Activated T-helper 2 cell treated with anti-CD3 and anti-CD28 coated beads, Interferon-gamma antibody, Interleukin-2, Interleukin-4, amounts not matched to agents 10 μg/mL and 5 μg/mL and 100 μg/mL, durations not matched to agents 14 hours and 24 hours and 36 hours (primary cell): ENCODE measurements at regions of chr10 and their contacts with region 1.

Region 1: DNA sequence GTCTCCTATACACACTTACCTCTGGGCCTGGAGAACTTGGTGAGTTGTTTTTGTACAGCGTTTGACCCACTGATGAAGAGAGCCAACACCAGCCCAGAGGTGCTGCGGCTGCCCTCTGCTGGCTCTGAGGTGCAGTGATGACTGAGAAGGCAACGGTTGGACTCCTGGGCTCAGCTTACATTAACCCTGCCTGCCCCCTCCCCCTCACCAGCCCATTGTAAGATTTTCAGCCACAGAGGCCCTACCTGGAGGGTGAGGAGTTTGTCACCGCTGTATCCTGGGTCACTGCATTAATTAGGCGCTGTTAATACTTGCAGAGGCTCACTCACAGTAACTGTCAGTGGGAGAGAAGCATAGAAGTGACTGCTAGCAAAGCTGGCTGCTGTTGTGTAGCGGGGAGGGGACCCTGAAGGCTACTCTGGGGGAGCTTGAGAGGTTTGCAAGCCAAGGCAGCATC is 19.0 kb upstream of the ANKRD2 start:
- DNase-seq: peak; percentile 45
- H3K4me3 Mint-ChIP-seq: no peak overlapping the region
- H3K27ac Mint-ChIP-seq: no peak overlapping the region
- H3K4me1 Mint-ChIP-seq: peaks cover 2% of the 10 kb centered on the region
- H3K27me3 Mint-ChIP-seq: no peaks in the 10 kb centered on the region

Region 2: GRCh38 chr10:96470116-96470743 is 1083.4 kb before region 1 on chr10:
- intact Hi-C with region 1: no loop called
- DNase-seq: peak; percentile 18
- H3K4me3 Mint-ChIP-seq: no peak overlapping the region
- H3K27ac Mint-ChIP-seq: no peak overlapping the region
- H3K4me1 Mint-ChIP-seq: no peaks in the 10 kb centered on the region
- H3K27me3 Mint-ChIP-seq: peaks cover 9% of the 10 kb centered on the region

Region 3: DNA sequence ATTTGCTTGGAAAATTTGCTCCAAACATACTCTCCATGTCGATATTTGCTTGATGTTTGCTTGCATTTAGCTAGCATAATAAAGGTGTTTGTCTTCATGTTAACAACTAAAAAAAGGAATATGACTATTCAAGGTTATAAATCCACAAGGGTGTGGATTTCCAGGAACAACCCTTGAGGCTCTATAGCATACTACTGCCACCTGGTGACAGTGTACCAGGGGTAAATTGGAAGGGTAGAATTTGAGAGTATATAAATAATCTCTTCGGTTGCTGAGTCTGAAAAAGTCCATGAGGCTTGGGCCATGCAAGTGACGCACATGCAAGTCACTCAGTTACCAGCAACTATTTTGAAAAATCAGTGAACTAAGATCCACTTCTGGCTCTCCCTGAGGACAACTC is 436.2 kb before region 1 on chr10:
- intact Hi-C with region 1: no loop called
- DNase-seq: no peak
- H3K4me3 Mint-ChIP-seq: no peak overlapping the region
- H3K27ac Mint-ChIP-seq: no peak overlapping the region
- H3K4me1 Mint-ChIP-seq: no peaks in the 10 kb centered on the region
- H3K27me3 Mint-ChIP-seq: peaks cover 4% of the 10 kb centered on the region

Region 4: GRCh38 chr10:97407211-97407951 is 146.2 kb before region 1 on chr10:
- intact Hi-C with region 1: loop called (anchors 1 kb)
- DNase-seq: peak; percentile 57
- H3K4me3 Mint-ChIP-seq: peak overlapping the region; percentile 13
- H3K27ac Mint-ChIP-seq: peak overlapping the region; percentile 61
- H3K4me1 Mint-ChIP-seq: peaks cover 16% of the 10 kb centered on the region
- H3K27me3 Mint-ChIP-seq: no peaks in the 10 kb centered on the region

Region 5: GRCh38 chr10:97463363-97464132 is 90.1 kb before region 1 on chr10:
- intact Hi-C with region 1: loop called (anchors 1 kb)
- DNase-seq: no peak
- H3K4me3 Mint-ChIP-seq: no peak overlapping the region
- H3K27ac Mint-ChIP-seq: no peak overlapping the region
- H3K4me1 Mint-ChIP-seq: no peaks in the 10 kb centered on the region
- H3K27me3 Mint-ChIP-seq: no peaks in the 10 kb centered on the region

Region 6: DNA sequence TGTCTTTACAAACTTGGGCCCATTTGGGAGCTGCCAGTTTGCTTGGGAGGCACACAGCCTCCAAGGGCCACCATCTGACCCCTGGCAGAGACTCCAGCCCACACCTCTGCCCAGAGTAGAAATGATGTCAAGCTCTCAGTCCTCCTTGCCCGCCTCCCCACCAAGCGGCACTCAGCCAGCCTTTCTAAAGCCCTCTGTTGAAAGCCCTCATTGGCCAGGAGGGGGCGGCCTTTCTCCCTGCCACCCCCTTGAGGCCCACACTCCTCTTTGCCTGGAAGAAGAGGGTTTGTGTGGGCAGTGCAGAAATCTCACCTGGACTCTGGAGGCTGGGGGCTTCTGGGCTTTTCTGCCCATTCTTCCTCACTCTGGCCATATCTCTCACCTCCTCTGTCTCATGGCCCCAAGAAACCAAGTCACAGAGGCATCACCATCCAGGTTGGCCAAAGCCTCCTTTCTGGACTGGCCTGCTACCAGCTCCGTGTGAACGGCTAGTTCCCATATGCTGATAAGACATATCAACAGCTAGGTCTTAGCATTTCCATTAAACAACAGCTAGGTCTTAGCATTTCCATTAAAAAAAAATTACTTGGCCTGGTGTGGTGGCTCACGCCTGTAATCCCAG is 18.7 kb before region 1 on chr10:
- intact Hi-C with region 1: loop called (anchors 1 kb)
- DNase-seq: no peak
- H3K4me3 Mint-ChIP-seq: no peak overlapping the region
- H3K27ac Mint-ChIP-seq: no peak overlapping the region
- H3K4me1 Mint-ChIP-seq: peaks cover 2% of the 10 kb centered on the region
- H3K27me3 Mint-ChIP-seq: no peaks in the 10 kb centered on the region

Region 7: DNA sequence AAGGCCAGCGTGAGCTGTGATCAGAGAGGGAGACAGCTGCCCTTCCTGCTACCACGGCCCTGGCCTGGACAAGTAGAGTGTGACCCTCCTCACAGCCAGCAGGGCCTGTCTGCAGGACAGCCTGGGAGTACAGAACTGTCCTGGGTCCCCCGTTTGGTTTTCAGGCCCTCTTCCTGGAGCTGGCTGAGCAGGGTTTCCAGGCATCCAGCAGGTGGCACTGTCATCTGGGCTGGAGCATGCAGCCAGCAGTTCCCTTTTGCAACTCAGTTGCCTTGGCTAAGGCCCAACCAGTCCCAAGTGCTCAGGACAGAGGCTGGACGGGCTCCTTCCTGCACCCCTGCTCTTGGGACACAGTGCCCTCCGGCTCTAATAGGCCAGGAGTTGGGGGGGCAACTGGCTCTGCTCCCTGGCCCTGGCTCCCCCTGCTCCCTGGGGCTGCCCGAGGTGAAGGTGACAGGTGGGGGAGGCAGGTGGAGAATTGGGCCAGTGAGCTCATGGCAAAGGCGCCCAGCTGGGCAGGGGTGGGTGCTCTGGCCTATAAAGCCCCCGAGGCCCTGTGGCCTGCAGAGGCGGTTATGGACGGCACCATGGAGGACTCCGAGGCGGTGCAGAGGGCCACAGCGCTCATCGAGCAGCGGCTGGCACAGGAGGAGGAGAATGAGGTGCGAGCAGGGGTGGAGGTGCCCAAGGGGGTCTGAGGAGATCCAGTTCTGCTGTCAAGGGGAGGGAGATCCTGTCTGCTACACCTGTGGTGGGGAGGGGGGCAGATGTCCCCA is 18.8 kb after region 1 on chr10 and contains the start of gene ANKRD2:
- intact Hi-C with region 1: no loop called
- DNase-seq: peak; percentile 41
- H3K4me3 Mint-ChIP-seq: no peak within 1 kb of the TSS
- H3K27ac Mint-ChIP-seq: no peak within 1 kb of the TSS
- H3K4me1 Mint-ChIP-seq: no peaks in the 10 kb centered on the region
- H3K27me3 Mint-ChIP-seq: no peaks in the 10 kb centered on the region
- total RNA-seq, gene ANKRD2: 0.18 and 0.57 TPM in 2 replicates

Region 8: GRCh38 chr10:97676770-97677581 is 123.4 kb after region 1 on chr10:
- intact Hi-C with region 1: no loop called
- DNase-seq: no peak
- H3K4me3 Mint-ChIP-seq: no peak overlapping the region
- H3K27ac Mint-ChIP-seq: no peak overlapping the region
- H3K4me1 Mint-ChIP-seq: peaks cover 12% of the 10 kb centered on the region
- H3K27me3 Mint-ChIP-seq: no peaks in the 10 kb centered on the region